ENCODE measurements at regions of chr3 and their contacts with region 1.

Region 1: DNA sequence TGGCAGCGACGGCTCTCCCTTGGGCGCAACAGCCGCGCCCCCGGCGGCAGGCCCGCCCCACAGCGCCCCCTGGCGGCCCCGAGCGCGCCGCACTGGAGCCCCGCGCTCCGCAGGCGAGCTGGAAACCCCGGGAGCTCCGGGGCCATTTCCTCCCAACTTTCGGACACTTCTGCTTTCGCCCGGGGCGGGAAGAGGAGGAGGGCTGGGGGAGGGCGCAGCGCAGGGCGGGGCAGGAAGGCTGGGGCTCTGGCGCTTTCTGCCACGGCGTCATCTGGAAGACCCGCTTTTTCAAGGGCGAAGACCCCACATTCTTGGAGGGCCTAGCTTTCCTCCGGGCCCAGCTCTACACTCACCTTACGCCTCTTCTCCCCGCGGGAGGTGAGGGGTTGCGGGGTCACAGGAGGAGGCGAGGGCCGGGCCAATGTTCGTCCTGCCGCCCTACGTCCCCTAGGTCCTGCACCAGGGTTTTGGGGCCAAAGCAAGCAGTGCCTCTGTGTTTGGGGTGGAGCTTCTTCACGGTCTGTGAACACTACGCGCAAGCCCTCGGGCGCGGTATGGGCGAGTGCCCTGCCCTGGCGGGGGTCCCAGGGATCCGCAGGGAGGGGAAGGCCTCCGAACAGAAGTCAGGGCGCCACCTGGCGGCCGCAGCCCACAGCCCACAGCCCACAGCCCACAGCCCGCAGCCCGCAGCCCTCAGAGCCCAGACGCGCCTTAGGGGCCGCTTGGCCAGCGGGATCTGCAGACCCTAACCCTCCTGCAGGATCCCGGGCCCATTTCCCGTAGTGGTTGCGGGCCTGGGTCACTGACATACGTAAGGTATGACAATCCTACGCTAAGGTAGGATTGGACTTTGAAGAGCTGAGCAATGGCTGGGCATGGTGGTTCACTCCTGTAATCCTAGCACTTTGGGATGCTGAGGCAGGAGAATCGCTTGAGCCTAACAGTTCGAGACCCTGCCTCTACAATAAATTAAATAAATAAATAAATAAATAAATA is 31.1 kb downstream of the FOXL2 start:
- DNase-seq: peak; percentile 90
- CTCF ChIP-seq: peak; percentile 91

Region 2: GRCh38 chr3:138594150-138594934 is 321.5 kb before region 1 on chr3 and contains the start of gene CEP70:
- CTCF ChIA-PET with region 1: interaction called, 503 read pairs
- POLR2A ChIA-PET with region 1: interaction called, 7 read pairs
- DNase-seq: peak; percentile 82
- CTCF ChIP-seq: peak; percentile 73

Region 3: DNA sequence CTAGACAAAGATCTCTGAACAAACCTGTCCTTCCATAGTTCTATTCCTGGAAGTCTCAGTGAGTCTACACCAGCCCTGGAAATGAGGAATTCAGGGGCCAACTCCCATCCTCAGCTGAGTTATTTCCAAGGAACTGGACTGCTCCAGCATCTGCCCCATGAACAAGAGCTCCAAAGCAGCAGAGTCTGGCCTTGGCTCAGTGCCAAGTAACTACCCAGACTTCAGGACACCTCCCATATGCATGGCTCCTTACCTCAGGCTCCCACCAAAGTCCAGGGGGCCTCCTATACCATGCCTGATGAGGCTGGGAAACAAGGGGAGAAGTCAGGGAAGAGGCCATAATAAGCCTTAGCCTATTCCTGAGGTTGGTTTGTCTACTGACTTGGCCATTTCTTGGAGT is 262.2 kb before region 1 on chr3:
- CTCF ChIA-PET with region 1: interaction called, 12 read pairs
- POLR2A ChIA-PET with region 1: no interaction called
- DNase-seq: no peak
- CTCF ChIP-seq: no peak

Region 4: GRCh38 chr3:138694287-138695007 is 221.4 kb before region 1 on chr3:
- CTCF ChIA-PET with region 1: interaction called, 433 read pairs
- POLR2A ChIA-PET with region 1: no interaction called
- DNase-seq: no peak
- CTCF ChIP-seq: no peak

Region 5: DNA sequence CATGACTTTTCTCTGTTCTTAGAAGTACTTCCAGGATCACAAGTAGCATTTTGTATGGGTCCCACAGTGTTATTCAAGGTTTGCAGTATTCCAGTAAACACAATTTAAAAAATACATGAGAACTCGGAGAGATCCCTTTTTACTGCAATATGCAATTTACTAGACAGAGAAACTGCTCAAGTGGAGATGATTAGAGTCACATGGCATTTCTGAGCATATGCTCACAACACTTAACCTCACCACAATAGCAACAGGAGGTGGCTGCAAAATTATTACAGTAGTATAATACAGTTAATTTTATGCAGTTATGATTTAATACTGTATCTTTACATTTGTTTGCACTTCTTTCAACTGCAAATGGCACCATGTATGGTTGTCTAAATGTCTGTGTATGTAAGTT is 168.6 kb before region 1 on chr3:
- CTCF ChIA-PET with region 1: interaction called, 10 read pairs
- POLR2A ChIA-PET with region 1: interaction called, 6 read pairs
- DNase-seq: no peak
- CTCF ChIP-seq: no peak

Region 6: GRCh38 chr3:138890555-138891187 is 25.1 kb before region 1 on chr3:
- CTCF ChIA-PET with region 1: interaction called, 30 read pairs
- POLR2A ChIA-PET with region 1: no interaction called
- DNase-seq: peak; percentile 58
- CTCF ChIP-seq: no peak

Measured in GM10248 (cell line).